Caco-2 (cell line): ENCODE measurements at regions of chr7 and their contacts with region 1.

Region 1: GRCh38 chr7:135414850-135415439 is 95.0 kb downstream of the CNOT4 start:
- DNase-seq: peak; percentile 70 to 72
- H3K4me3 ChIP-seq: no peak overlapping the region
- H3K4me3 Mint-ChIP-seq: no peak overlapping the region
- H3K27ac Mint-ChIP-seq: no peak overlapping the region
- H3K4me1 ChIP-seq: no peaks in the 10 kb centered on the region
- H3K4me1 Mint-ChIP-seq: no peaks in the 10 kb centered on the region
- H3K27me3 ChIP-seq: no peaks in the 10 kb centered on the region
- H3K27me3 Mint-ChIP-seq: no peaks in the 10 kb centered on the region
- CTCF ChIP-seq: peak; percentile 79 to 81

Region 2: DNA sequence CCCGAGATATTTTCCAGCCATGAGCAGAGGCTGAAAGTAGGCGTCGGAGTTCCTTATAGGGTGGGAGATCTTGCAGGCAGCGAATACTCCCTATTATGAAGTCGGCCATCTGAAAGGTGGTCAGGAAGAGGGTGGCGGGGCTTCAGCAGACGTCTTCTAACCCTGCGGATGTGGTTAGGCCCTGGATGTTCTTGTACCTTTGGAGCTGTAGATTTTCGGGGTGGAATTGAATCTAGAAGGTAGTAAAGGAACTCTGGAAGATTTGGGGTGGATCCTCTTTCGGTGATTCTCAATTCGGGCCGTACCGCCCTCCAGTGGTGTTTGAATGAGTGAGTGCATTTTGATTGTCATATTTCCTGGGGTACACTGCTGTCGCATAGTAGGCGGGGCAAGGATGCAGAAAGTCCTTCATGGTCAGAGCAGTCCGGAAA is 143.4 kb after region 1 on chr7:
- CTCF ChIA-PET with region 1: no interaction called
- POLR2A ChIA-PET with region 1: no interaction called
- intact Hi-C with region 1: loop called (anchors 1 kb)
- DNase-seq: peak; percentile 72 to 74
- H3K4me3 ChIP-seq: peak overlapping the region; percentile 82
- H3K4me3 Mint-ChIP-seq: no peak overlapping the region
- H3K27ac Mint-ChIP-seq: no peak overlapping the region
- H3K4me1 ChIP-seq: peaks cover 28% of the 10 kb centered on the region
- H3K4me1 Mint-ChIP-seq: peaks cover 7% of the 10 kb centered on the region
- H3K27me3 ChIP-seq: no peaks in the 10 kb centered on the region
- H3K27me3 Mint-ChIP-seq: peaks cover 4% of the 10 kb centered on the region
- CTCF ChIP-seq: peak; percentile 45 to 51